ENCODE measurements at regions of chr12 and their contacts with region 1.

Region 1: DNA sequence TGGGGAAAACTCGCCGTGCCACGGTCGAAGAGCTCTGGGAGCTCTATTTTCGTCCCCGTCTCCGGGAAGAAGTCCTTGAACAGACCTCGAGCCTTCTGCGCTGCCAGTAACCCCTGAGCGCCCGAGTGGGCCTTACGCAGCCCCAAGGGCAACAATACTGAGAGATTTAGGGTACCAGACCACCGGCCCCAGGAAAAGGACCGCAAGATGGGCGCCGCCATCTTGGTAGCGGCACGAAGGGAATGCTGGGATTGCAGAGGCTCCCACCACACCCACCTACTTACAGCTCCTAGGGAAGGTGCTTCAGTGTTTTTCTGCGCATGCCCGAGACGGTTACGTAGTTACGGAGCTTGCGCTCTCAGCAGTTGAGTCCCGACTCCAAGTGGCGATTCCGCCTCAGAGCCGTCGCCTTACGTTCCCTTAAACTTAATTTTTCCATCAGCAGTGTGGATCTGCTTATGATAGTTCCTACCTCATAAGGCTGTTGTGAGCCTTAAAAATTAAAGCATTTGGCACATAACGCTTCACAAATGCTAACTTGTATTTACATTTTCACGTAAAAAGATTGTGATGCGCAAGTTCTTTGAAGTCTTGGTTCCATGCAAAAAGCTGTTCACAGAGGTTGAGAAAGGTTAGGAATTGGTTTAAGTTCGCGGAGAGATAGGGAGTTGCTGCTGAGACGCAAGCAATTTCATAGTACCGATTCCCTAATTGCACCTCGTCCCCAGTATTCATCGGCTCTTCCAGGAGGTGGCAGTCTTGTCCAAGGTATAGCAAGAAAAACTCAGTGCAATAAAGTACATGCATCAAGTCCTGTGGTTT is at the start of gene YARS2:
- DNase-seq: peak; percentile 93
- H3K4me3 Mint-ChIP-seq: peak within 1 kb of the TSS; percentile 91
- H3K27ac Mint-ChIP-seq: peak within 1 kb of the TSS; percentile 93
- H3K4me1 Mint-ChIP-seq: peaks cover 21% of the 10 kb centered on the region
- H3K27me3 Mint-ChIP-seq: no peaks in the 10 kb centered on the region
- total RNA-seq, gene YARS2: 23.1 to 28.4 TPM

Region 2: DNA sequence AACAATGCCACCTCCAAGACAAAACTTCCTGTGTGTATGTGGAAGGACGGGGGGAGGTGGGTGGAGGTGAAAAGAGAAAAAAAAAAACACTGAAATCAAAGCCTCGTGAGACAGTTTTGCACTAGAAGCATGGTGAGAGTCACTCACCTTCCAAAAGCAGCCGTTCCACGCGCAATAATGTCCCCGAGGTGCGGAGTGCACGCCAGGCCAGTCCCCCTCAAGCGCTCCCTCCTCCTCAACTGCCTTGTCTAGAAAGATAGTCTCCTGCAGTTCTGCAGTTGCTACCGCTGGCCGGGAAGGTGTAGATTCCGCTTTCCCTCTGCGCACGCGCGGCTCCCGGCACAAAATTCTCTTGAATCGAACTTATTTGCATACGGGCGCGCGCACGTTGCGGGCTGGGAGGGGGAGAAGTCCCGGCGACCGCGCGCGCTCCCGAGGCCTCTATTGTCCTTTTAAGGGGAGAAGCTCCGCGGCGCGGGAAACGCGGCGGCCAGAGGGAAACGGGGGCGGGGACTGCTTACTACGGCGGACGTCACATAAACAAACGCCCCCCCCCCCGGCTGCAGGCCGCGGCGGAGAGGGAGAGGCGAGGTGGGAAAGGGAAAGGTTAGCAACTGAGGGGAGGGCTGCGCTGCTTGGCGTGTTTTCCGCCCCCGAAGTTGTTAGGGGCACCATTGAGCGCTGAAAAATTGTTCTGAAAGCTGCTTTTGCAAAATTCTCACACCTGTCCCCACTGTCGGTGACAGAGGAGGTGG is 1429.8 kb before region 1 on chr12 and contains the start of gene SINHCAF:
- CTCF ChIA-PET with region 1: no interaction called
- POLR2A ChIA-PET with region 1: interaction called, 3 read pairs
- intact Hi-C with region 1: loop called (anchors 5 kb)
- DNase-seq: peak; percentile 99
- H3K4me3 Mint-ChIP-seq: peak within 1 kb of the TSS; percentile 100
- H3K27ac Mint-ChIP-seq: peak within 1 kb of the TSS; percentile 99
- H3K4me1 Mint-ChIP-seq: peaks cover 24% of the 10 kb centered on the region
- H3K27me3 Mint-ChIP-seq: peaks cover 2% of the 10 kb centered on the region
- total RNA-seq, gene SINHCAF: 181 to 186 TPM

Region 3: DNA sequence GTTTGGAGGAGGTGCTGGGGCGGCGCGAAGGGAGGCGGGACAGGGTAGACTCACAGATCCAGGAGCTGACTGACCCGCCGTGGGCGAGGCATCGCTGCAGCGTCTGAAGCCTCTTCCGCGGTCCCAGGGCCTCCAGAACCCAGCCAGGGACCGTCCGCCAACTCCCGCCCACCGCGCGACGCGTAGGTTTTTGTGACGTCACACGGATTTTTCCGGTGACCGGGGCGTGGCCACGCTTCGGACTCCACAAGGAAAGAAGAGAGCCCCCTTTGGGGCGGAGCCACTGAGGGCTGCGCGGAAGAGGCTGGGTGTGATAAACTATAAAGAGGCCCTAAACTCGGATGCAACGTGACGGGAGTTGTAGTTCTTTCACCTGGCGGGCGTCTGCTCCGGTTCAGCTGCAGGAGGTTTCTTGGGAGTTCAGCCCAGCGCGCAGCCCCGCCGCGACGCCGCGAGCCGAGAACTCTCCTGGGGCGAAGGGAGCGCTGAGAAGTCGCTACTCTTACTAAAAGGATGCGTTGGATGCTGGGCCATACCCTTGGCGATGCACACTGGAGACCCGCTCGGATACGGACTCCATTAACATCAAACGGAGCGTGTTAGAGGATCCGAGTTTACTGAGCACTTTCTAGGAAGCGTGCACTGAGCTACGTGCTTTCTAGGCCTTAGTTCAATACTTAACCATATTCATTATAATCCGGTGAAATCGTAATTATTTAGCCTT is 1026.8 kb before region 1 on chr12 and contains the start of gene AMN1:
- CTCF ChIA-PET with region 1: interaction called, 3 read pairs
- POLR2A ChIA-PET with region 1: no interaction called
- intact Hi-C with region 1: loop called (anchors 5 kb)
- DNase-seq: peak; percentile 100
- H3K4me3 Mint-ChIP-seq: peak within 1 kb of the TSS; percentile 96
- H3K27ac Mint-ChIP-seq: peak within 1 kb of the TSS; percentile 97
- H3K4me1 Mint-ChIP-seq: peaks cover 41% of the 10 kb centered on the region
- H3K27me3 Mint-ChIP-seq: no peaks in the 10 kb centered on the region
- total RNA-seq, gene AMN1: 3.2 to 4.7 TPM

Region 4: GRCh38 chr12:32455607-32456071 is 300.2 kb before region 1 on chr12:
- CTCF ChIA-PET with region 1: interaction called, 37 read pairs
- POLR2A ChIA-PET with region 1: interaction called, 4 read pairs
- intact Hi-C with region 1: loop called (anchors 1 kb)
- DNase-seq: no peak
- H3K4me3 Mint-ChIP-seq: no peak overlapping the region
- H3K27ac Mint-ChIP-seq: no peak overlapping the region
- H3K4me1 Mint-ChIP-seq: no peaks in the 10 kb centered on the region
- H3K27me3 Mint-ChIP-seq: peaks cover 3% of the 10 kb centered on the region

Region 5: GRCh38 chr12:32516230-32516629 is 239.6 kb before region 1 on chr12:
- CTCF ChIA-PET with region 1: no interaction called
- POLR2A ChIA-PET with region 1: no interaction called
- intact Hi-C with region 1: no loop called
- DNase-seq: no peak
- H3K4me3 Mint-ChIP-seq: no peak overlapping the region
- H3K27ac Mint-ChIP-seq: no peak overlapping the region
- H3K4me1 Mint-ChIP-seq: no peaks in the 10 kb centered on the region
- H3K27me3 Mint-ChIP-seq: peaks cover 9% of the 10 kb centered on the region

Region 6: GRCh38 chr12:32743264-32743663 is 12.6 kb before region 1 on chr12:
- CTCF ChIA-PET with region 1: interaction called, 29 read pairs
- POLR2A ChIA-PET with region 1: interaction called, 5 read pairs
- intact Hi-C with region 1: no loop called
- DNase-seq: no peak
- H3K4me3 Mint-ChIP-seq: no peak overlapping the region
- H3K27ac Mint-ChIP-seq: peak overlapping the region; percentile 30
- H3K4me1 Mint-ChIP-seq: peaks cover 13% of the 10 kb centered on the region
- H3K27me3 Mint-ChIP-seq: no peaks in the 10 kb centered on the region

Region 7: DNA sequence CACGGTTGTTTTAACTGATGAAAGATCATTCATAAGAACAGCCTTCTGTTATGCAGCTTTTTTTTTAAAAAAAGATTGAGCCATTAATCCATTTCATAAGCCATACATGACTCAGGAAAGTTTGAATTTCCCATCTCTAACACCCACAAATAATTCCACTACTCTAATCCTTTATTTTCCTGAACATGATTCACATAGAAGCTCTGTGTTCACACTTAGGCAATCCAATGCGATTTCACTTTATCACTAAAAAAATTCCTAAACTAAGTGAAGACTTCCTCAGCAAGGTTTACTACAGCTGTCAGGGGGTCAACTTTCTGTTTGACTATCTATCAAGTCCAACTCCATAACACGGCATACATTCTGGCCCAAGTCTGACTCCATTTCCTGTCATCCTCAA is 114.9 kb after region 1 on chr12:
- CTCF ChIA-PET with region 1: no interaction called
- POLR2A ChIA-PET with region 1: no interaction called
- intact Hi-C with region 1: no loop called
- DNase-seq: no peak
- H3K4me3 Mint-ChIP-seq: no peak overlapping the region
- H3K27ac Mint-ChIP-seq: no peak overlapping the region
- H3K4me1 Mint-ChIP-seq: no peaks in the 10 kb centered on the region
- H3K27me3 Mint-ChIP-seq: peaks cover 2% of the 10 kb centered on the region

Region 8: DNA sequence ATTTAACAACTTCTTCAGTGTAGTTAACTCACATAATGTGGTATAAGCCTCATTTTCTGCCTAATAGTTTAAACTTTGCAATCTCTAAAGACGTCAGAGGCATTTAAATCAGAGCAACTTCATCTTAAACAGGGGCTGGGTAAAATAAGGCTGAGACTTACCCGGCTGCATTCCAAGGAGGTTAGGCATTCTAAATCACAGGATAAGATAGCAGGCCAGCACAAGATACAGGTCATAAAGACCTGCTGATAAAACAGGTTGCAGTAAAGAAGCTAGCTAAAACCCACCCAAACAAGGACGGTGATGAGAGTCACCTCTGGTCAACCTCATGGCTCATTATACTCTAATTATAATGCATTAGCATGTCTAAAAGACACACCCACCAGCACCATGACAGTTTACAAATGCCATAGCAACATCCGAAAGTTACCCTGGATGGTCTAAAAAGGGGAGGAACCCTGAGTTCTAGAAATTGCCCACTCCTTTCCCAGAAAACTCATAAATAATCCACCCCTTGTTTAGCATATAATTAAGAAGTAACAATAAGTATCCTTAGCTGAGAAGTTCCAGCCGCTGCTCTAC is 256.5 kb after region 1 on chr12:
- CTCF ChIA-PET with region 1: no interaction called
- POLR2A ChIA-PET with region 1: no interaction called
- intact Hi-C with region 1: no loop called
- DNase-seq: no peak
- H3K4me3 Mint-ChIP-seq: no peak overlapping the region
- H3K27ac Mint-ChIP-seq: no peak overlapping the region
- H3K4me1 Mint-ChIP-seq: no peaks in the 10 kb centered on the region
- H3K27me3 Mint-ChIP-seq: no peaks in the 10 kb centered on the region

Region 9: DNA sequence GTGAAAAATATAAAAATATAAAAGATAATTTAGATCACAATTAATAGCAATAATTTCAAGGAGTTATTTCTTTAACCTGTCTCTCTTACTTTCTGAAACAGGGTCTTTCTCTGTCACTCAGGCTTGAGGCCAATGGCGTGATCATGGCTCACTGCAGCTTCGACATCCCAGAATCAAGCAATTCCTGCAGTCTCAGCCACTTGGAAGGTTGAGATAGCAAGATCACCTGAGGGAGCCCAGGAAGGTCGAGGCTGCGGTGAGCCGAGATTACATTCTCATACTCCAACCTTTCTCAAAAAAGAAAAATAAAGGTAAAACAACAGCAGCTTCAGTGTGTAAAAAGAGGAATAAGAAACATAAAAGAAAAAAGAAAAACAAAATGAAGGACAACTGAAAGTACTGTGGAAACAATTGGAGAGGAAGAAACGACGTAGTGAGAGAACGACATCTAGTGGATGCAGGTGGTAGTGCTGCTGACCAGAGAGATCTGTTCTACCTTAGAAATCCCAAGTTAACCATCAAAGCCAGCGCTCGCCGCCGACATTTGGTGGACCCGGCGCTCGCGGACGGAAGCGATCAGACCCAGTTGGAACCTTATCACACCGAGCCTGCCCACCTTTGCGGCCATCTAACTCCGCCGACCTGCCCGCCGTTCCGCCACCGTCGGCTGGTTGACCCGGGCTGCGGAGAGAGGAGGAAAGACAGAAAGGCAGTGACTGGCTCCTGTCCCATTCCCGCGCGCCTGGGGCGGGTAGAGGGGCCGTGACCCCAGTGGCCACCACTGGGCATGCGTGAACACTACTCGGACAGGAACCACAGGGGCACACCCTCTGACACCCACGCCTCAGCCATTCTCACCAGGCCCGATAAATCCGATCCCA is 1462.5 kb after region 1 on chr12:
- CTCF ChIA-PET with region 1: no interaction called
- POLR2A ChIA-PET with region 1: no interaction called
- intact Hi-C with region 1: loop called (anchors 1 kb)
- DNase-seq: peak; percentile 73
- H3K4me3 Mint-ChIP-seq: peak overlapping the region; percentile 56
- H3K27ac Mint-ChIP-seq: no peak overlapping the region
- H3K4me1 Mint-ChIP-seq: peaks cover 2% of the 10 kb centered on the region
- H3K27me3 Mint-ChIP-seq: peaks cover 2% of the 10 kb centered on the region